ENCODE measurements at regions of chr7 and their contacts with region 1.

Region 1: DNA sequence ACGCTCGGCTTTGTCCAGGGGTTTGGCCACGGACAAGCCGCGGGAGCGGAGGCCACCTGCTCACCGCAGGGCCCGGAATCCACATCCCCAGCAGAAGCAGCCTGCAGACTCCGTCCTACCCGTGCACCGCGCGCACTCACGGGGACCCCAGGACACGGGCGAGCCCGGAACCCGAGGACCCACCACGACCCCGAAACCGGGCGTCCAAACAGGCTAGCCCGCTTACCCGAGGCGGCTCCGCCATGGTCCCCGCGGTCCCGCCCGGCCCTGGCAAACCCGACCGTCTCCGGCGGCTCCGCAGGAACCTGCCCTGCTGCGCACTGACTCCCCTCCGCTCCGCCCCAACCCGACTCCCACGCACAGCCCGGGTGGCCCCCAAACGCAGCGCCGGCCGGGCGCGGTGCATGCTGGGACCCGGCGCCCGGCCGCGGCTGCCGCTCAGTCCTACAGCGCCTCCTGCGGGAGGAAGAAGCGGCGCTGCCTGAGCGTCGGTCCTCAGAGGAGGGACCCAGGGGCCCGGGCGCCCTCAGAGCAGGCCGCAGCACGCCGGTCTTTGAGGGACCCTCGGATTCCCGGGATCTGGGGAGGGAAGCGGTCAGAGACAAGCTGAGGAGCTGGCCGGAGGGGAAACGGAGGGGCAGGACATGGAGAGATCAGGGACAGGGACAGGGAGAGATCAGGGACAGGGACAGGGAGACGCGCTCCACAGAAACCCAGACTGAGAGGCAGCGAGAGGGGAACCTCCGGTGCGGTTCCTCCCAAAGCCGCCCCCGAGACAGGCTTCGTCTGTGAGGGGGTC is at the start of gene ZNF786:
- DNase-seq: peak; percentile 90
- ATAC-seq: peak; percentile 84
- H3K4me3 Mint-ChIP-seq: peak within 1 kb of the TSS; percentile 100
- H3K27ac Mint-ChIP-seq: peak within 1 kb of the TSS; percentile 100
- H3K4me1 Mint-ChIP-seq: peaks cover 32% of the 10 kb centered on the region
- H3K27me3 Mint-ChIP-seq: no peaks in the 10 kb centered on the region
- CTCF ChIP-seq: no peak
- total RNA-seq, gene ZNF786: 9.2 and 11.0 TPM in 2 replicates

Region 2: DNA sequence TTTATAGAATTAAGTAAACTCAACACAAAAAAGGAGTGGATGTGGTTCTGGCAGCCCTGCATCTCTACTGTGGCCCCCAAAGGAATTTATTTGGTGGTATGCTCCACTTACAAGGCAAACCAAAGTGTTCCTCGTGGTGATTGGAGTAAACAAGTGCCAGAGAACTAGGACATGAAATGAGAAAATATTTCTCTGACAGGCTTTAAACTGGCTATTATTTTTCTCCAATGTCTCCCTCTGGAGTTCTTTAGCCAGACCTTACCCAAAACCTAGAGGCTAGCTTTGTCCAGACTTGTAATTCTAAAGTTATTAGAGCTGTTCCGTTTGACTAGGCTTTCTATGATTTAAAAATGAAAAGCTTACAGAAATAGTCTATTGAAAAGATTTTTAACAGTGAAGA is 1983.8 kb before region 1 on chr7:
- CTCF ChIA-PET with region 1: no interaction called
- POLR2A ChIA-PET with region 1: no interaction called
- intact Hi-C with region 1: no loop called
- DNase-seq: no peak
- ATAC-seq: no peak
- H3K4me3 Mint-ChIP-seq: no peak overlapping the region
- H3K27ac Mint-ChIP-seq: no peak overlapping the region
- H3K4me1 Mint-ChIP-seq: no peaks in the 10 kb centered on the region
- H3K27me3 Mint-ChIP-seq: no peaks in the 10 kb centered on the region
- CTCF ChIP-seq: no peak

Region 3: DNA sequence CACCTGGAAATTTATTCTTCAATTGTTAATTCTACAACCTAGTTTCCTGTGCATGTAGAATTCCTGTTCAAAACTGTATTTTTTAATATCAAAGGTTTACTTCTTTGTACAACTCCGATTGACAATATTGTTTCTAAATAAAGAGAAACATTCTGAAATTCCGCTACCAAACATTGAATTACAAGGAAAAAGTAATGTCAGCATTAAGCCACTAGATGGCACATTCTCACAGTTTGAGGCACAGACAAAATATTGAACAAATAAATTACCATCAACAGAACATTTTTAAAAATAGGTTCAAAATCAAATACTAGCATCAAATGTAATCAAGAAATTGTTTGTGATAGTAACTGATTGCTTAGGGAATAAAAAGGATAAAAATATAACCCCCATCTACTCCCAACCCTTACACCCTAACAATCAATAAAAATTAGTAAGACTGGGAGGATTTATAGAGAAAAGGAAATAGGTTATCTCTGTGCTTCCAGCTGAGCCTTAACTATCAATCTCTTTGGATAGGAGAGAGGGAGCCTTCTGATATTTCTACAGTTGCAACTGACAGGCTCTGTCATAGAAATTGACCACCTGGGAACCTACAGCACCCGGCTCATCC is 586.6 kb before region 1 on chr7:
- CTCF ChIA-PET with region 1: no interaction called
- POLR2A ChIA-PET with region 1: no interaction called
- intact Hi-C with region 1: loop called (anchors 10 kb)
- DNase-seq: no peak
- ATAC-seq: no peak
- H3K4me3 Mint-ChIP-seq: no peak overlapping the region
- H3K27ac Mint-ChIP-seq: peak overlapping the region; percentile 50
- H3K4me1 Mint-ChIP-seq: peaks cover 76% of the 10 kb centered on the region
- H3K27me3 Mint-ChIP-seq: no peaks in the 10 kb centered on the region
- CTCF ChIP-seq: no peak

Region 4: DNA sequence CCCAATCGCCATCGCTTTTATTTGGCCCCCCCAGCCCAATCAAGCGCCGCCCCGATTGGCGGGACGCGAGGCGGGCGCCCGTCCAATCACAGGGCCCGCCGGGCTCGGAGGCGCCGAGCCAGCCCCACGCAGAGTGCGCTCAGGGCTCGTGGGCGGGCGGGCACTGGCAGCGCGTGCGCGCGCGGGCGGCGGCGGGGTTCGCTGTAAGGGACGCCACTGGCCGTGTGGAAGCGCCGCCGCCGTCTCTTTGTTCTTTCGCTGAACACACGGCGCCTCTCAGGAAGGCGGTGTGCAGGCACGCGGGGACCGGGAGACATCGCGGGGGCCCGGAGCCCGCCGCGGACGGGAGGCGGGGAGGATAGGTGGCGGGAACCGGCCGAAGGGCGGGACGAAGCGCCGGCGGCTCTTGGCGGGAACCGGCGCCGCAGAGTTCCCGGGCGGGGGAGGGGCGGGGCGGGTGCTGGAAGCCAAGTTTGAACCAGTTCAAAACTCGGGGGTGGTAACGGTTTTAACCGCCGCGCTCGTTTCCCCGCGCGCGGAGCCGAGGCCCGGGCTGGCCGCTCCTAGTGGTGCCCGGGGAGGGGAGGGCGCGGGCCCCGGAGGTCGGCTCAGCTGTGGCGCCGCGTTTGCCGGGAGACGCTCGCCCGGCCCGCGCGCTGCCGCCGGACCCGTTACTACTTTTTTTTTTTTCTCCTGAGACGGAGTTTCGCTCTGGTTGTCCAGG is 206.1 kb before region 1 on chr7:
- CTCF ChIA-PET with region 1: no interaction called
- POLR2A ChIA-PET with region 1: no interaction called
- intact Hi-C with region 1: loop called (anchors 2 kb)
- DNase-seq: peak; percentile 95
- ATAC-seq: peak; percentile 93
- H3K4me3 Mint-ChIP-seq: peak overlapping the region; percentile 87
- H3K27ac Mint-ChIP-seq: peak overlapping the region; percentile 82
- H3K4me1 Mint-ChIP-seq: peaks cover 26% of the 10 kb centered on the region
- H3K27me3 Mint-ChIP-seq: no peaks in the 10 kb centered on the region
- CTCF ChIP-seq: no peak

Region 5: DNA sequence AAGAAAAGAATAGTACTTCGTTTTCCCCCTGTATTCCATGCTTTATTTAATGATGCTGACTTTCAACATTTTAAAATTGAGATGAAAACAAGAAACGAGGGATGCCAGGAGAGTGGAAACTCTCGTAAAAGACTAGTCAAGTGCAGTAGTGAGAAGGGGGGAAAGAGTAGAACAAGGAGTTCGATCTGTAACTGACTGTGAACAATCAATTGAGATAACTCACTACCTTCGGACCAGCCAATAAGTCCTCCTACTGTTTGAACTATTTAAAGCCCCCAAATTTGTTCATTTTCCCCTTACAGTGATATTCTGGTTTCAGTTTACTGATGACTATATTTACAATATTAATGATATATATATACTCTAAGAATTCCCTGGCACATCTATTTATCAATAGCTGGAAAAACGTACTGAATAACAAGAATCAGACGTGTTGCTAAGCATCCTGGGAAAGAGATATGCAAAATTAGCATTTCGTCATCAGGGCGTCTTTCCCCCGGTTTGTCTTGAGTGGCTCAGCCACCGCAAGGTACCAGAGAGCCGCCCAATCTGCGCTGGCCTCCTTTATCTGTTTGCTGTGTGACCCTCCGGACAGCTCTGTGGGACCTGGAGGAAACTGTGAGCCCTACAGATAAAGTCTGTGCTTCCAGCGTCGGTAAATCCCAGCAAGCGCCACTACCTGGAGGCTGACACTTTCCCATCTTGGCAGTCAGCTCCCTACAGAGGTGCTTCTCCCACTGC is 103.4 kb before region 1 on chr7:
- CTCF ChIA-PET with region 1: no interaction called
- POLR2A ChIA-PET with region 1: interaction called, 5 read pairs
- intact Hi-C with region 1: loop called (anchors 1 kb)
- DNase-seq: peak; percentile 60
- ATAC-seq: peak; percentile 85
- H3K4me3 Mint-ChIP-seq: peak overlapping the region; percentile 96
- H3K27ac Mint-ChIP-seq: peak overlapping the region; percentile 93
- H3K4me1 Mint-ChIP-seq: peaks cover 50% of the 10 kb centered on the region
- H3K27me3 Mint-ChIP-seq: peaks cover 2% of the 10 kb centered on the region
- CTCF ChIP-seq: no peak

Region 6: DNA sequence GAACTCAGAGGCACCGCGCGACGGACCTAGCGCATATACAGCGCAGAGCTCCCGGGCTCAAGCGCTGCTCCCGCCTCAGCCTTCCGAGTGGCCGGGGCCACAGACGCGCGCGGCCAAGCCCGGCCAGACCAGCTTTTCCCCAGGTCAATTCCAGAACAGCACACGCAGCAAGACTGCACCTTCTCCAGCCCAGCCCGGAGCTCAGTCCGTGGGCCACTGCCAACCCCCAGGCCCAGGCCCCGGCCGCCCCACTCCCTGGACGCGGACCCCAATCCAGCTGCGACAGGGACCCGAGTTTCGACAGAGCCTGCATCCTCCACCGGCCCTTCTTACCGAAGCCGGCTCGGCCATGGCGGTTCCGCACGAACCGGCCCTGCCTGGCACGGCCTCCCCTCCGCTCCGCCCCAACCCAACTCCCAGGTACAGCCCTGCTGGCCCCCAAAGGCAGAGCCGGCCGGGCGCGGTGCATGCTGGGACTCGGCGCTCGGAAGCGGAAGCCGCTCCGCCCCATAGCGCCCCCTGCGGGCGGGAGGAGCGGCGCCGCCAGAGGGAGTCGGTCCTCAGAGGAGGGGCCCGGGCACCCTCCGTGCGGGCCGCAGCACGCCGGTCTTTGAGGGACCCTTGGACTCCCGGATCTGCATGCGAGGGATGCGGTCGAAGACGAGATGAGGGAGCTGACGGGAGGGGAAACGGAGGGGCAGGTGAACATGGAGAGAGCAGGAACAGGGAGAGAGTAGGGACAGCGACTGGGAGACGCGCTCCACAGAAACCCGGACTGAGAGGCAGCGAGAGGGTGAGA is 35.5 kb after region 1 on chr7 and contains the start of gene ZNF425:
- CTCF ChIA-PET with region 1: no interaction called
- POLR2A ChIA-PET with region 1: interaction called, 13 read pairs
- intact Hi-C with region 1: loop called (anchors 1 kb)
- DNase-seq: peak; percentile 98
- ATAC-seq: peak; percentile 82
- H3K4me3 Mint-ChIP-seq: peak within 1 kb of the TSS; percentile 98
- H3K27ac Mint-ChIP-seq: peak within 1 kb of the TSS; percentile 98
- H3K4me1 Mint-ChIP-seq: peaks cover 21% of the 10 kb centered on the region
- H3K27me3 Mint-ChIP-seq: no peaks in the 10 kb centered on the region
- CTCF ChIP-seq: peak; percentile 31
- total RNA-seq, gene ZNF425: 1.4 and 1.9 TPM in 2 replicates

Region 7: DNA sequence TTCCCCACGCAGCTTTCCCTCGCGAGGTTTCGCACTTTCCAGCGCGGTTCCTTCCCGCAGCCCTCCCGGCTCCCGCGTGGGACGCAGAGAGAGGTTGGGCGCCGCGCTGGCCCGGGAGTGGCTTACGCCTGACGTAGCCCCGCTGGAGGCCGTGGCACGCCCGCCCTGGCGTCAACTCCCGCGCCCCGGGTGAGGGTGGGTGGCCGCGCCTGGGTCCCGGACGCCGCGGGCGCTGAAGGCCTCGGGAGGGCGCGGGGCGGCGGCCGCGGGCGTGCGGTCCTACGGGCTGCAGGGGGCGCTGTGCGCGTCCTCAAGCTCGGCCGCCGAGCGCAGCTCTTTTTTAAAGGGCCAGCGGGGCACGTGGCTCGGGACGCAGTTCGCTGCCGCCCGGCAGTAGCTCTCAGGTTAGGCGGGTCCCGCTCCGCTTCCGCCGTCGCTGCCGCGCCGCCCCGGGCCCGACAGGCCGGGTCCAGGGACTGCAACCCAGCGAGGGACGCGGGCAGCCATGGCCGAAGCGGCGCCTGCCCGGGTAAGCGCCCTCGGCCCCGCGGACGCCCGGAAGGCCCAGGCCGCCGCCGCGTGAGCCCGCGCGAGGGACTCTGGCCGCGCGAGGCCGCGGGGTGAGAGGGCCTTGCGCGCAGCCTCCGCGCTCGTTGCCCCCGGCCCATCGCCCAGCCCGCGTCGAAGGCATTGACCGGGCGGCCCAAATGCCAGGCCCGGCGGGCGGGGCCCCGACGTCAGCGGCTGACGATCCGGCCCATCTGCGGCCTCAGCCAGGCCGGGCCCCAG is 171.4 kb after region 1 on chr7 and contains the start of gene ZNF783:
- CTCF ChIA-PET with region 1: no interaction called
- POLR2A ChIA-PET with region 1: no interaction called
- intact Hi-C with region 1: loop called (anchors 1 kb)
- DNase-seq: peak; percentile 88
- ATAC-seq: peak; percentile 91
- H3K4me3 Mint-ChIP-seq: peak within 1 kb of the TSS; percentile 89
- H3K27ac Mint-ChIP-seq: peak within 1 kb of the TSS; percentile 90
- H3K4me1 Mint-ChIP-seq: peaks cover 23% of the 10 kb centered on the region
- H3K27me3 Mint-ChIP-seq: no peaks in the 10 kb centered on the region
- CTCF ChIP-seq: no peak
- total RNA-seq, gene ZNF783: 28.5 and 34.1 TPM in 2 replicates